HEK293 (cell line): ENCODE measurements at regions of chr11 and their contacts with region 1.

Region 1: GRCh38 chr11:27296497-27296896 is 66.5 kb downstream of the CCDC34 start:
- H3K4me3 ChIP-seq: no peak overlapping the region
- H3K27ac ChIP-seq: no peak overlapping the region
- H3K4me1 ChIP-seq: no peaks in the 10 kb centered on the region
- CTCF ChIP-seq: no peak

Region 2: GRCh38 chr11:27139742-27140367 is 156.6 kb before region 1 on chr11:
- CTCF ChIA-PET with region 1: no interaction called
- POLR2A ChIA-PET with region 1: no interaction called
- H3K4me3 ChIP-seq: no peak overlapping the region
- H3K27ac ChIP-seq: peak overlapping the region; percentile 60
- H3K4me1 ChIP-seq: peaks cover 18% of the 10 kb centered on the region
- CTCF ChIP-seq: no peak

Region 3: GRCh38 chr11:27196203-27196897 is 100.1 kb before region 1 on chr11:
- CTCF ChIA-PET with region 1: interaction called, 15 read pairs
- POLR2A ChIA-PET with region 1: no interaction called
- H3K4me3 ChIP-seq: no peak overlapping the region
- H3K27ac ChIP-seq: peak overlapping the region; percentile 53
- H3K4me1 ChIP-seq: peaks cover 19% of the 10 kb centered on the region
- CTCF ChIP-seq: no peak

Region 4: DNA sequence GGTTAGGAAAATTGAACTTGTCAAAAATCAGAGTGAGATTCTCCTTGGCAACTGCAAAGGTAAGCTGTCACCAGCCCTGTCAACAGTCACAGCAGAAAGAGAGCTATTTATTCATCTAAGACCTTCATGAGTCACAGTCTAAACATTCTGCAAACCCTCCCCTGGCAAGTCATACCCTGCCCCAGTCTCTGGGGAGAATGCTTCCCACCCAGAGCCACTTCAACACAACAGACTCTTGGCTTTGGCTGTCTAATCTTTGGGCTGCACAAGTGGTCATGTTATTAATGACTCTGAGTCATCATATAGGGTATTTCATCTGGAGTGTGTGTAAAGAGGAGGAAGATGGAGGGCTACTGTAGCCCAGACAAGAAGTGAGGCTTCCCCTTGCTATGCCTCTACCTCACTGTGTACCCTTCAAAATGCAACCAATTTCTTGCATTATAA is 86.9 kb before region 1 on chr11:
- CTCF ChIA-PET with region 1: interaction called, 47 read pairs
- POLR2A ChIA-PET with region 1: no interaction called
- H3K4me3 ChIP-seq: no peak overlapping the region
- H3K27ac ChIP-seq: peak overlapping the region; percentile 64
- H3K4me1 ChIP-seq: peaks cover 17% of the 10 kb centered on the region
- CTCF ChIP-seq: no peak

Region 5: GRCh38 chr11:27281740-27282590 is 14.5 kb before region 1 on chr11:
- CTCF ChIA-PET with region 1: interaction called, 19 read pairs
- POLR2A ChIA-PET with region 1: no interaction called
- H3K4me3 ChIP-seq: no peak overlapping the region
- H3K27ac ChIP-seq: no peak overlapping the region
- H3K4me1 ChIP-seq: no peaks in the 10 kb centered on the region
- CTCF ChIP-seq: no peak

Region 6: DNA sequence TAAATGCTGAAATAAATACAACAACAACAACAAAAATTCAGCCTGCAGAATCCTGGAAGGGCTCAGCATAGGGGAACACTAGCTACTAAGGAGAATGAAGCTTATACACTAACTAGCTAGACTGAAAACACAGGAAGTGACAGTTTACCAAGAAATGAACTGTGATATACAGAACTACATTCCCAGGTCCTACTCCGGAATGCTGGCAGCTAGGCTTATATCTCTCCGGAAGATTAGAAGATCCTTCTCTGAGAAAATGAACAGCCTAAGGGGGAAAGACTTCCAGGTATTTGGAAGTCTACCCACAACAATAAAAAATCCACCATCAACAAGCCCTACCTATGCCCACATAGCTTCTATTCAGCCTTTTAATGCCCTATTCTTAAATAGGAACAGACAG is 35.5 kb after region 1 on chr11:
- CTCF ChIA-PET with region 1: no interaction called
- POLR2A ChIA-PET with region 1: no interaction called
- H3K4me3 ChIP-seq: no peak overlapping the region
- H3K27ac ChIP-seq: no peak overlapping the region
- H3K4me1 ChIP-seq: no peaks in the 10 kb centered on the region
- CTCF ChIP-seq: no peak

Region 7: DNA sequence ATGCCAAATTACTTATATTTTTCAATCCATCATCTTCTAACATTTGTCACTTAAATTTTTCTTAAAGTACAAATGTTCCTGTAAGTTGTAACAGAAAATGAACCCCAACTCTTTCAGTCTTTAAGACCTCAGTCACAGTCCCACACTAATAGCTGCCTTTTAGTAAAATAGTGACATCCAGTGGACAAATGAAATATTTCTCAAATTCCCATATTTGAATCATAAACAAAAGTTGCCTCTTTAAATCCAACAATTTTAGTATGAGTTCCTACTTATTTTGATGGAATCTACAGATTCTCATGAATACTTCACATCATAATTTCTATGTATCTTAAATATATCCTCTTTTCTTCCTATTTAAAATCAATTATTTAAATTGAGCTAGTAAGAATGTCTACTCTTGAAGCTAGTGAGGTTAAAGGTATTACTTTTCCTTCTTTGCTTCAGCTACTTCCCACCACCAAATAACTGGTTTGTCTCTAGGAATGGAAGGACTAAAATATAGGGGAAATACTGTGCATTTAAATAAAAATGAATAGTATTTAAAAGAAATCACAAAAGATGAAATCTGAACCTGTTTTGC is 200.9 kb after region 1 on chr11:
- CTCF ChIA-PET with region 1: interaction called, 18 read pairs
- POLR2A ChIA-PET with region 1: no interaction called
- H3K4me3 ChIP-seq: no peak overlapping the region
- H3K27ac ChIP-seq: no peak overlapping the region
- H3K4me1 ChIP-seq: no peaks in the 10 kb centered on the region
- CTCF ChIP-seq: no peak